WTC11 (cell line): ENCODE measurements at regions of chr11 and their contacts with region 1.

Region 1: DNA sequence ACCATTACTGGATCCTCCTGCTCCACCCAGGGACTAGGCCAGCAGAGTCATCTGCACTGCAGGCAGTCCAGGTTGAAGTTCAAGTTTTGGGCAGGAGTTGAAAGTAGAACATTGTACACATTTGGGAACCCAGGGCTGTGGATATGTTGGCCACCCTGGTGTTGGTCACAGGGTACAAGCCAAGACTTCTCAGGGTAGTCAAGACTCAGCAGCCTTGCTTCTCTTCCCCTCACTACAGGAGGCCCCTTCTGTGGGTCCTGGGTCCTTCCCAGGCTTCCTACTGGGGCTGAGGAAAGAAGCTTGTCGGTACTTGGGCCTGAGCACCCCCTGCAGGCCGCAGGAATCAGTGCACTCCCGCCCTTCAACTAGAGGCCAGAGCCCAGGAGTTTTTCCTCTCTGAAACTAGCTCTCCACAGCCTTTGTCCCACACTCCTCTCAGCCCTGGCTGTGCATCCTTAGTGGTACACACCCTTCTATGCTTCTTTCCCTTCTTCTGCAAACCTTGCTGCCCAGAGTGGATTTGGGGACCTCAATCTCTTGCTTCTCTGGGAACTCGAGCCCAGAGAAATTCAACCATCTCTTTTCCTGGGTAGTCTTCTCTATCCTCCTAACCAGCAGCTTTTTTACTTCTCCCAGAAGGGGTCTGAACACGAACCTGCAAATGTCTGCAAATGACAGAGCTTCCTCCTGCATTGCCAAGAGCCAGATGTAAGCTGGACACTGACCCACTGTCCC is 2.6 kb upstream of the HPX start:
- DNase-seq: peak; percentile 68
- ATAC-seq: peak; percentile 90
- H3K4me3 Mint-ChIP-seq: no peak overlapping the region
- H3K27ac Mint-ChIP-seq: no peak overlapping the region
- H3K4me1 Mint-ChIP-seq: no peaks in the 10 kb centered on the region
- H3K27me3 Mint-ChIP-seq: no peaks in the 10 kb centered on the region
- CTCF ChIP-seq: peak; percentile 80

Region 2: DNA sequence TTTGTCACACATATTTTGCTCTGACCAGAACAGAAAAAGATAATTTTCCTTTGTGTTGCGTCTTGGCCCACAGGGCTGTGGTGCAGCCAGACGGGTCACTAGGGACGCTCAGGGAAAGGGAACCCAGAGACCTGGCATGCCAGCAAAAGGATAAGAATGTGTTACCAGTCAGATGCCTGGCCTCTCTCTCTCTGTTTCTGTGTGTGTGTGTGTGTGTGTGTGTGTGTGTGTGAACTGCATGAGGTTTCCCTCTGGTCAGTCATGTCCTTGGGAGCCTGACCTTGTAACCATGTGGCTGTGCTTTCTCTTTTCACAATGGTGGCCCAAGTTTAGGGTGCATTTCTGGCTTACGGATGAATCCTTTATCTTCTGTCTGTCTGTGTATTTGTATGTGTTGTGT is 158.4 kb before region 1 on chr11:
- CTCF ChIA-PET with region 1: no interaction called
- POLR2A ChIA-PET with region 1: no interaction called
- DNase-seq: no peak
- ATAC-seq: no peak
- H3K4me3 Mint-ChIP-seq: no peak overlapping the region
- H3K27ac Mint-ChIP-seq: no peak overlapping the region
- H3K4me1 Mint-ChIP-seq: peaks cover 31% of the 10 kb centered on the region
- H3K27me3 Mint-ChIP-seq: peaks cover 98% of the 10 kb centered on the region
- CTCF ChIP-seq: no peak

Region 3: GRCh38 chr11:6389921-6390724 is 53.3 kb before region 1 on chr11 and contains the start of gene SMPD1:
- CTCF ChIA-PET with region 1: interaction called, 28 read pairs
- POLR2A ChIA-PET with region 1: interaction called, 3 read pairs
- DNase-seq: peak; percentile 87
- ATAC-seq: peak; percentile 87
- H3K4me3 Mint-ChIP-seq: peak within 1 kb of the TSS; percentile 92
- H3K27ac Mint-ChIP-seq: peak within 1 kb of the TSS; percentile 96
- H3K4me1 Mint-ChIP-seq: peaks cover 32% of the 10 kb centered on the region
- H3K27me3 Mint-ChIP-seq: peaks cover 13% of the 10 kb centered on the region
- CTCF ChIP-seq: no peak
- total RNA-seq, gene SMPD1: 4.4 to 6.6 TPM (median 5.6 TPM) in 3 replicates

Region 4: GRCh38 chr11:6431861-6432260 is 11.6 kb before region 1 on chr11:
- CTCF ChIA-PET with region 1: interaction called, 29 read pairs
- POLR2A ChIA-PET with region 1: interaction called, 3 read pairs
- DNase-seq: no peak
- ATAC-seq: no peak
- H3K4me3 Mint-ChIP-seq: no peak overlapping the region
- H3K27ac Mint-ChIP-seq: no peak overlapping the region
- H3K4me1 Mint-ChIP-seq: peaks cover 7% of the 10 kb centered on the region
- H3K27me3 Mint-ChIP-seq: peaks cover 8% of the 10 kb centered on the region
- CTCF ChIP-seq: no peak

Region 5: DNA sequence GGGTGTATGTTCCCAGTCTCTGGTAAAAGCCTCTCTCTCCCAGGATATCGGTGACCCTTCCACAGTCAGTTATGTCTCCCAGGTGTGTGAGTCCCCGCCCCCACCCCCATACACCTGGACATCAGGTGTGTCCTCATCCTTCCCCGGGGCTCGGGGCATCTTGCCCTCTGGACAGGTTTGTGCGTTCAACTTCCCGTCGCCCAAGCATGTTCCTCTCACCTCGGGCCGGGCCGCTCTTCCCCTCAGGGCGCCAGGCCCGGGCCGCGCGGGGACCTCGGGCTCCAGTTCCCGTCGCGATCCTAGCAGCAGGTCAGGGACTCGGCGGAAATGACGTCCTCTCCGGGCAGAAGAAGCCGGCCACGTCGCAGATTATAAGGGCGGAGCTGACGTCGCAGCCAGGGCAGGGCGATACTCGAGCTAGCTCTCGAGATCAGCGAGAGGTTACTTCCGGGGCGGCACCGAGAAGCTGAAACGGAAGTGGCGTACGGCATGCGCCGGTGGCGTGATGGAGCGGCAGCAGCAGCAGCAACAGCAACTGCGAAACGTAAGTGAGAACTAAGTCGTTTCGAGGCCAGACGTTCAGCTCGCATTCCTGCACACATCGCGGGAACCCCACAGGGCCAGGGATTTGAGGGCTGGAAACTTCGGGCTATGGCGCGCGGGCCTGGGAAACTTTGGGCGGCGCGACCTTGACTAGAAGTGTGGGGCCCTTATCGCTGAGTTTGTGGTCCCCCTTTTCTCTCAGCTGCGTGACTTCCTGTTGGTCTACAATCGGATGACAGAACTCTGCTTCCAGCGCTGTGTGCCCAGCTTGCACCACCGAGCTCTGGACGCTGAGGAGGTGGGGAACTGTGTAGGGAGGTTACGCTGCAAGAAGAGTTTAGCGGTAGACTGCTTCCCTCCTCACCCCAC is 37.8 kb after region 1 on chr11 and contains the starts of genes ARFIP2 and TIMM10B:
- CTCF ChIA-PET with region 1: interaction called, 35 read pairs
- POLR2A ChIA-PET with region 1: no interaction called
- DNase-seq: peak; percentile 97
- ATAC-seq: peak; percentile 94
- H3K4me3 Mint-ChIP-seq: peak within 1 kb of the TSS; percentile 98
- H3K27ac Mint-ChIP-seq: peak within 1 kb of the TSS; percentile 99
- H3K4me1 Mint-ChIP-seq: peaks cover 18% of the 10 kb centered on the region
- H3K27me3 Mint-ChIP-seq: no peaks in the 10 kb centered on the region
- CTCF ChIP-seq: no peak
- total RNA-seq, gene ARFIP2: 46.0 to 53.1 TPM (median 46.1 TPM) in 3 replicates
- total RNA-seq, gene TIMM10B: 35.8 to 42.6 TPM (median 36.1 TPM) in 3 replicates

Region 6: DNA sequence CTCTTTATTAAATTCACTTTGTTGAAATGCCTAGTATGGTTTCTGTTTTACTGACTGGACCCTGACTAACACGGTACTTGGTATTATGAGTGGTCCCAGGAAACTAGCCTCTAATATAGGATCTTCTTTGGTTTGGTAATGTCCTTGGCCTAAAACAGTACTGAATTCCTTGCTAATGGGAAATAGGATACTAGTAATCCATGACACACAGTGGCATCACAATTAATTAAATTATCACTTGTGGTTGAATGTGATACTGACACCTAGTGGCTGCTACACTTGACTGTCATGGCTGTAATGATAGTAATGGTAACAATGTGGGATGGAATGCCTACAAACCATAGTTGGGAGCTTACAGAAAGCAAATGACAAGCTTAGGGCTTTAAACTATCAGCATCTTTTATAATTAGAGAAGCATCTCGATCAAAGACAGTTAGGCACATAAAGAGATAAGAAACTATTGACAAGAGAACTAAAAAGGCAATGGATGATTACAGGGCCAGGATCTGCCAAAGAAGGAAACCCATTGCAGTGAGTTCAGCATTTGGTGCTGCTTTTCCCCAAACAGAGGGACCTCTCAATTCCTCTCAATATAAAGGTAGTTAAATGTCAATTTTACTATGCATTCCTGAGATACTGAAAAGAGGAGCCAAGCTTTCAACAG is 62.3 kb after region 1 on chr11:
- CTCF ChIA-PET with region 1: interaction called, 13 read pairs
- POLR2A ChIA-PET with region 1: no interaction called
- DNase-seq: no peak
- ATAC-seq: peak; percentile 89
- H3K4me3 Mint-ChIP-seq: no peak overlapping the region
- H3K27ac Mint-ChIP-seq: peak overlapping the region; percentile 8; the same call in 1 of the 2 replicates
- H3K4me1 Mint-ChIP-seq: no peaks in the 10 kb centered on the region
- H3K27me3 Mint-ChIP-seq: no peaks in the 10 kb centered on the region
- CTCF ChIP-seq: peak; percentile 53; the same call in 1 of the 2 replicates

Region 7: DNA sequence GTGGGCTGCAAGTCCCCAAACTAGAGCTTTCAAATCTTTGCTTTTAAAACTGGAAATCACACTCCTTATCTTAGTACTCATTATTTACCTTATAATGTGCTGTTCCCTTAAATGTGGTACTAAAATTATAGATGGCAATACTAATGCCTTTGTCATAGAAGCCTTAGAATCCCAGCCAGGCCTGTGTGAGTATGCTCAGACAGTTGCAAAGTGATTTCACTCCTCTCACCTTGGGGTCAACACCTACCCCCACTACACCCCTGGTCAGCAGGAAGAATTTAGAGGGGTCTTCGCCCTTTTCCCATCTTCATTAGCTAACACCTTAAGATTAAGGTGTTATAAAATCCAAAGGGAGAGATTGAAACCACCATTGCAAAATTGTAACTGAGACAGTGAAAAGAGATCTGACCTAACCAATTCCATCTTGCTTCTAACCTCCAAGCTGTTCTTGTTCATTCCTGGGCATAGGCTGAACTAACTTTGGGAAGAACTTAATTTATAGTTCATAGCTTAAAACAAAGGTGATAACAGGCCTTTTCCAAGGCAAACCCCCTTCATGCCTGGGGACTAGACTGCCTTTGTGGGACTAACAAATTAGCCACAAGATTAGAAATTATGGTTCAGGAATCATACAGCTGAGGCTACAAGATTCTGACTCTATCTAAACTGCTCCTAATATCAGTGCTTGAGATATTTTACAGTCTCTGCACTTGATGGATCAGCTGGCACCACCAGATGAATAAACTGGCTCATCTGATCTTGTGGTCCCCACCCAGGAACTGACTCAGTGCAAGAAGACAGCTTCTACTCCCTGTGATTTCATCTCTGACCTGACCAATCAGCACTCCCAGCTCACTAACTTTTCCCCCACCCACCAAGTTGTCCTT is 250.1 kb after region 1 on chr11:
- CTCF ChIA-PET with region 1: no interaction called
- POLR2A ChIA-PET with region 1: no interaction called
- DNase-seq: no peak
- ATAC-seq: no peak
- H3K4me3 Mint-ChIP-seq: no peak overlapping the region
- H3K27ac Mint-ChIP-seq: no peak overlapping the region
- H3K4me1 Mint-ChIP-seq: peaks cover 8% of the 10 kb centered on the region
- H3K27me3 Mint-ChIP-seq: no peaks in the 10 kb centered on the region; the same call in 1 of the 2 replicates
- CTCF ChIP-seq: no peak